MCF 10A (cell line): ENCODE measurements at regions of chr5 and their contacts with region 1.

Region 1: DNA sequence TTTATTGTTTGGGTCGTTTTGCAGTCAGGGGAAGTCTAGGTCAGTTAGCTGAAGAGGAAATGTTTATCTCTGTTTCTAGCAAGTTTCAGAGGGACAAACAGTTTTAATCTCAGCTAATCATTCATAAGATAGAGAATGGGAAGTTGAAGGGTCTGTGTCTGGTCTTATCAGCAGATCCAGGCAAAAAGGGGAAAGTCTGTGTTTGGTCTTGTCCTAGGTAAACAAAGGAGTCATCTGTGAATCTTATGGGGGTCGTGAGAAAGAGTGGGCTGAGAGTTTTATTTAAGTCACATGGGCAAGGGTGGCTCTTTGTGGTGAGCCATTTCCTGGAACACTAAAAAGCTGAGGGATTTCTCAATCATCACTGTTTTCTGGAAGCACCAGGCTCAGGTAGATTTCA is 5.6 kb upstream of the SNCAIP start:
- DNase-seq: peak; percentile 45
- H3K4me3 Mint-ChIP-seq: no peak overlapping the region
- H3K27ac Mint-ChIP-seq: no peak overlapping the region
- H3K4me1 Mint-ChIP-seq: peaks cover 9% of the 10 kb centered on the region
- H3K27me3 Mint-ChIP-seq: no peaks in the 10 kb centered on the region
- CTCF ChIP-seq: no peak

Region 2: GRCh38 chr5:122030251-122030650 is 276.2 kb before region 1 on chr5:
- CTCF ChIA-PET with region 1: no interaction called
- POLR2A ChIA-PET with region 1: no interaction called
- intact Hi-C with region 1: no loop called
- DNase-seq: no peak
- H3K4me3 Mint-ChIP-seq: no peak overlapping the region
- H3K27ac Mint-ChIP-seq: no peak overlapping the region
- H3K4me1 Mint-ChIP-seq: peaks cover 5% of the 10 kb centered on the region
- H3K27me3 Mint-ChIP-seq: no peaks in the 10 kb centered on the region
- CTCF ChIP-seq: no peak

Region 3: DNA sequence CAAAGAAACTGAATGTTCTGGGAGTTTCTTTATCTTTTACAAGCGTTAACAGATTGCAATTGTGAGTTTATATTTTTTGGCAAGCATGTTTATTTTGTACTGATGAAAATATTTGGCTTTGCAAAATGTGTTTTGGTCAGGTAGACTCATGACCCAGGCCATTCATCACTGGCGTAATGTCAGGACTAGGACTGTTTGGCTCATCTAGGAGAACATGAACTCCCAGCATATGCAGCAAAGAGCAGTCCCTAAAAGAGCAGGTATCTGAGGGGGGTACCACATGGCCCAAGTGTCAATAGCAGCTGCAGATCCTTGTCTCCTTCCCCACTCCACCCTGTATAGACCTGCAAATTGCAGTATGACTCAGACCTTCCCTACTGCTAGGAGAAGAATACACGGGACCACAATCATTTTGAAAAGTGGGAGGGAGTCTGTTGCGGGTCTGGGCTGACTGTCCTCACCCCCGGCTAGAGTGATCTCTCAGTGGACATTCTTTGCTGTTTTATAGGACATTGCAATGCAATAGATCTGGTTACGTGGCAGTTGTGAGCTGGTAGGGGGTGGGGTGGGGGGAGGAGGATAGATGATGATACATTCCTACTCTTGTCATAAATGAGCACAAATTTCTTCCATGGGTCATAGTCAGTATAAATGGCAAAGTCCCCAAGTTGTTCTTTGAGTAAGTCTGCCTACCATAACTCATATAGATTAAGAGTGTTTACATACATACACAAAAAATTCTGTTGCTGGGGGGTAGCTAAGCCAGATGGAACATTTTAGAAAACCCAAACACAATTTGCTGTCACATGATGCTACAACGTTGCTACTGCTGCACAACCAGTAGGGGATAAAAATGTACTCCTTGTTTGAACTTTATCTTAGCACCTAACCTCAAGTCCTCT is 15.2 kb before region 1 on chr5:
- CTCF ChIA-PET with region 1: interaction called, 10 read pairs
- POLR2A ChIA-PET with region 1: interaction called, 7 read pairs
- intact Hi-C with region 1: no loop called
- DNase-seq: peak; percentile 45
- H3K4me3 Mint-ChIP-seq: no peak overlapping the region
- H3K27ac Mint-ChIP-seq: no peak overlapping the region
- H3K4me1 Mint-ChIP-seq: peaks cover 17% of the 10 kb centered on the region
- H3K27me3 Mint-ChIP-seq: no peaks in the 10 kb centered on the region
- CTCF ChIP-seq: no peak